Activated CD8-positive, alpha-beta T cell treated with anti-CD3 and anti-CD28 coated beads, Interleukin-2, amount 10 ng/mL, durations not matched to agents 7 days and 5 days (primary cell): ENCODE measurements at regions of chr21 and their contacts with region 1.

Region 1: GRCh38 chr21:36141513-36141925 is 6.6 kb downstream of the CBR3 start:
- DNase-seq: peak; percentile 94
- ATAC-seq: peak; percentile 92
- H3K4me3 Mint-ChIP-seq: no peak overlapping the region
- H3K27ac Mint-ChIP-seq: peak overlapping the region; percentile 63
- H3K4me1 Mint-ChIP-seq: peaks cover 44% of the 10 kb centered on the region
- H3K27me3 Mint-ChIP-seq: no peaks in the 10 kb centered on the region

Region 2: DNA sequence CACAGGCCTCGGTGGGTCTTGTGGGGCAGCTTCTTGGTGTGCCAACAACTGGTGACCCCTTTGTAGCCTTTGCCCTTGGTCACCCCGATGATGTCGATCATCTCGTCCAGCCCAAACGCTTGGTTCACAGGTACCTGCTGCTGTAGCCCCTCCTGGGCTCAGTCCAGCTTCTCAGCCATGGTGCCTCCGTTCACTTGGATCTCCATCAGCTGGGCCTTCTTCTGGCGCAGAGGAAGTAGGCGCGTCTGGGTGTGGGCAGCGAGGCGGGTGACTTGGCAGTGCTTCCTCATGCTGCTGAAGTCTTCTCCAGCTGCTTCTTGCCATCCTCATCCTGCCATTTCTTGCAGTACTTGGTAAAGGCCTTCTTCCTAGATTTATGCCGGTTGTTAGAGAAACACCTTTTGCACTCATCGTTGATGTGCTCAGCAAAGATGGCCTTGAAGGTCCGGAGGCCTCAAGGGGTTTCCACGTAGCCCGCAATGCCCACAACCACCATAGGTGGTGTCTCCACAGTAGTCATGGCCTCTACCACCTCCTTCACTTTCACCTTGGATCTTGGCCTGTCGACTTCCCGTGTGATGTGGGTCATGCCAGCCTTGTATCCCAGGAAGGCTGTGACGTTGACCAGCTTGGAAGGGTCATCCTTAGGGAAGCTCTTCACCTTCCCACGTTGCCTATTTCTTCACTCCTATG is 28.1 kb after region 1 on chr21:
- CTCF ChIA-PET with region 1: interaction called, 13 read pairs
- POLR2A ChIA-PET with region 1: no interaction called
- DNase-seq: peak; percentile 28
- ATAC-seq: no peak
- H3K4me3 Mint-ChIP-seq: no peak overlapping the region
- H3K27ac Mint-ChIP-seq: no peak overlapping the region
- H3K4me1 Mint-ChIP-seq: peaks cover 14% of the 10 kb centered on the region
- H3K27me3 Mint-ChIP-seq: no peaks in the 10 kb centered on the region

Region 3: GRCh38 chr21:36209626-36210171 is 68.2 kb after region 1 on chr21:
- CTCF ChIA-PET with region 1: interaction called, 56 read pairs
- POLR2A ChIA-PET with region 1: interaction called, 3 read pairs
- DNase-seq: peak; percentile 73
- ATAC-seq: no peak
- H3K4me3 Mint-ChIP-seq: no peak overlapping the region
- H3K27ac Mint-ChIP-seq: peak overlapping the region; percentile 2
- H3K4me1 Mint-ChIP-seq: peaks cover 16% of the 10 kb centered on the region
- H3K27me3 Mint-ChIP-seq: no peaks in the 10 kb centered on the region

Region 4: DNA sequence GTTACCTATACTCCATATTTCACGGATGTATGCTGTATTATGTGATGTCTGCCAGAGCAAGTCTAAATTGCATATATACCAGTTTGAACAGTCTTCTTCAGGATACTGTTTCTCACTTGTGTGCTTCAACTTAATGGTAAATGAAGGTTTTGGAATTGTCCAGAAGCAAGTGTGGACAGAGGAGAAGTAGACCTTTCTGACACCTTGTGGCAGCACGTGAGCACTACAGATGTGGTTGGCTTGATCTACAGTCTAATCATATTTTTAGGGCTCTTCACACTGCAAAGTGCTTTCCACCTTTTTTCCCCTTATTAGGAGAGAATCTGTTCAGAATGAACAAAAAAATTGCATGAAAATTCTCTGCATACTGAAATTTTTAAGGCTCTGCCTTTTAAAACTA is 189.4 kb after region 1 on chr21:
- CTCF ChIA-PET with region 1: interaction called, 10 read pairs
- POLR2A ChIA-PET with region 1: no interaction called
- DNase-seq: peak; percentile 60
- ATAC-seq: peak; percentile 88
- H3K4me3 Mint-ChIP-seq: no peak overlapping the region
- H3K27ac Mint-ChIP-seq: peak overlapping the region; percentile 4
- H3K4me1 Mint-ChIP-seq: peaks cover 31% of the 10 kb centered on the region
- H3K27me3 Mint-ChIP-seq: no peaks in the 10 kb centered on the region

Region 5: DNA sequence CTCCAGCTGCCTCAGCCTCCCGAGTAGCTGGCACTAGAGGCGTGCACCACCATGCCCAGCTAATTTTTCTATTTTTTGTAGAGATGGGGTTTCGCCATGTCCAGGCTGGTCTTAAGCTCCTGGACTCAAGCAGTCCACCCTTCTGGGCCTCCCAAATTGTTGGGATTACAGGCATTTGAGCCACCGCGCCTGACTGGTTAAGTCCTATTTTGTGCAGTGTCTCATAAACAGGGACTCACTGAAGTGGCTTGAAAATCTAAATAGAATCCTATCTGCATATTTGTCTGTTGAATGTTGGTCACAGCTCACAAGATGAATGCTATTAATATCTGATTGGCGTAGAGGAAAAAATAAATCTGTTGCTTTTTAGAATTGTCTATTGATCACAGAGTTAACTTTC is 237.7 kb after region 1 on chr21:
- CTCF ChIA-PET with region 1: no interaction called
- POLR2A ChIA-PET with region 1: no interaction called
- DNase-seq: no peak
- ATAC-seq: no peak
- H3K4me3 Mint-ChIP-seq: no peak overlapping the region
- H3K27ac Mint-ChIP-seq: no peak overlapping the region
- H3K4me1 Mint-ChIP-seq: peaks cover 3% of the 10 kb centered on the region
- H3K27me3 Mint-ChIP-seq: no peaks in the 10 kb centered on the region